ENCODE measurements at regions of chr4 and their contacts with region 1.

Region 1: GRCh38 chr4:131091896-131092295 is 1995.9 kb downstream of the C4orf33 start:
- DNase-seq: no peak
- H3K4me3 Mint-ChIP-seq: no peak overlapping the region
- H3K27ac Mint-ChIP-seq: no peak overlapping the region
- H3K4me1 Mint-ChIP-seq: no peaks in the 10 kb centered on the region
- H3K27me3 Mint-ChIP-seq: no peaks in the 10 kb centered on the region
- CTCF ChIP-seq: peak; percentile 11

Region 2: GRCh38 chr4:131430302-131430701 is 338.4 kb after region 1 on chr4:
- CTCF ChIA-PET with region 1: no interaction called
- intact Hi-C with region 1: loop called (anchors 2 kb)
- DNase-seq: peak; percentile 5
- H3K4me3 Mint-ChIP-seq: peak overlapping the region; percentile 36
- H3K27ac Mint-ChIP-seq: no peak overlapping the region
- H3K4me1 Mint-ChIP-seq: peaks cover 6% of the 10 kb centered on the region
- H3K27me3 Mint-ChIP-seq: no peaks in the 10 kb centered on the region
- CTCF ChIP-seq: no peak

Region 3: GRCh38 chr4:131644619-131645018 is 552.7 kb after region 1 on chr4:
- CTCF ChIA-PET with region 1: no interaction called
- intact Hi-C with region 1: loop called (anchors 2 kb)
- DNase-seq: peak; percentile 13
- H3K4me3 Mint-ChIP-seq: no peak overlapping the region
- H3K27ac Mint-ChIP-seq: no peak overlapping the region
- H3K4me1 Mint-ChIP-seq: no peaks in the 10 kb centered on the region
- H3K27me3 Mint-ChIP-seq: no peaks in the 10 kb centered on the region
- CTCF ChIP-seq: no peak

Region 4: DNA sequence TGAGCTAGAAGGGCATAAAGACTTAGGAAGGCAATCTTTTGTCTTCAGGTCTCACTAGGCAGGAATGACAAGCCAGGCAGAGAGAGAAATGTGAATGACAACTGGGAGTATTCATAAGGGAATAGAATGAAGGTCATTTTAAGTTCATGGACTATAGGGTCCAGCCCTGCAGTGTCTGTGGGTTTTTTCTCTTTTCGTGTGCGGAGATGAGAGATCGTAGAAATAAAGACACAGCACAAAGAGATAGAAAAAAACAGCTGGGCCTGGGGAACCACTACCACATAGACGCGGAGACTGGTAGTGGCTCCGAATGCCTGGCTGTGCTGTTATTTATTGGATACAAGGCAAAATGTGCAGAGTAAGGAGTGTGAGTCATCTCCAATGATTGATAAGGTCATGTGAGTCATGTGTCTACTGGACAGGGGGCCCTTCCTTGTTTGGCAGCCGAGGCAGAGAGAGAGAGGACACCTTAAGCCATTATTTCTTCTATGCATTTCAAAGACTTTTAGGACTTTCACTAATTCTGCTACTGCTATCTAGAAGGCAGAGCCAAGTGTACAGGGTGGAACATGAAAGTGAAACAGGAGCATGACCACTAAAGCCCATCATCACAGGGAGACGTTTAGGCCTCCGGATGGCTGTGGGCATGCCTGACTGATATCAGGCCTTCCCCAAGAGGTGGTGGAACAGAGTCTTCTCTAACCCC is 1135.4 kb after region 1 on chr4:
- CTCF ChIA-PET with region 1: interaction called, 3 read pairs
- intact Hi-C with region 1: loop called (anchors 1 kb)
- DNase-seq: peak; percentile 21
- H3K4me3 Mint-ChIP-seq: peak overlapping the region; percentile 61
- H3K27ac Mint-ChIP-seq: peak overlapping the region; percentile 44
- H3K4me1 Mint-ChIP-seq: peaks cover 8% of the 10 kb centered on the region
- H3K27me3 Mint-ChIP-seq: no peaks in the 10 kb centered on the region
- CTCF ChIP-seq: no peak

Region 5: DNA sequence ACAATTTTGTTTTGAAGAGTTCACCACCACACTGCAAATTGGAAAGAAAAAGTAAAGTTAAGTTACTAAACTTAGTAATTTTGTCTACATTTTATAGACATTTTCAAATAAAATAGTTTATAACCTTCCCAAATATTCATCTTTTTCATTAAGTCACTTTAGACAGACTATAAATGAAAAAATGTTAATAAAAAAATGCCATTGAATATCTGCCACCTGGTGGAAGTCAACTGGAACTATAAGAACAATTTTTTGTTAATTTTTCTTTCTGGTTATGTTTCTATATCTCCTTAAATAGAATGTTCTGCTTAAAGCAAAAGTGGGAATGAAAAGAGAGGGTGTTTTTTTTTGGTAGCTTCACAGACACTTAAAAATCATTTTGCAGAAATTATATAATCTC is 1522.8 kb after region 1 on chr4:
- CTCF ChIA-PET with region 1: no interaction called
- intact Hi-C with region 1: loop called (anchors 5 kb)
- DNase-seq: no peak
- H3K4me3 Mint-ChIP-seq: no peak overlapping the region
- H3K27ac Mint-ChIP-seq: no peak overlapping the region
- H3K4me1 Mint-ChIP-seq: no peaks in the 10 kb centered on the region
- H3K27me3 Mint-ChIP-seq: no peaks in the 10 kb centered on the region
- CTCF ChIP-seq: no peak

Measured in Calu3 (cell line).